Activated T-helper 1 cell treated with anti-CD3 and anti-CD28 coated beads, Interleukin-12 subunit alpha, Interleukin-12 subunit beta, Interleukin-2, Interleukin-4 antibody, amounts not matched to agents 30 ng/mL and 10 ng/mL and 1 ng/mL, durations not matched to agents 14 hours and 24 hours and 36 hours (primary cell): ENCODE measurements at regions of chr20 and their contacts with region 1.

Region 1: GRCh38 chr20:51595058-51595532 is 52.6 kb upstream of the NFATC2 start:
- DNase-seq: peak; percentile 67
- H3K4me3 Mint-ChIP-seq: peak overlapping the region; percentile 54
- H3K27ac Mint-ChIP-seq: peak overlapping the region; percentile 82
- H3K4me1 Mint-ChIP-seq: peaks cover 46% of the 10 kb centered on the region
- H3K27me3 Mint-ChIP-seq: peaks cover 3% of the 10 kb centered on the region

Region 2: DNA sequence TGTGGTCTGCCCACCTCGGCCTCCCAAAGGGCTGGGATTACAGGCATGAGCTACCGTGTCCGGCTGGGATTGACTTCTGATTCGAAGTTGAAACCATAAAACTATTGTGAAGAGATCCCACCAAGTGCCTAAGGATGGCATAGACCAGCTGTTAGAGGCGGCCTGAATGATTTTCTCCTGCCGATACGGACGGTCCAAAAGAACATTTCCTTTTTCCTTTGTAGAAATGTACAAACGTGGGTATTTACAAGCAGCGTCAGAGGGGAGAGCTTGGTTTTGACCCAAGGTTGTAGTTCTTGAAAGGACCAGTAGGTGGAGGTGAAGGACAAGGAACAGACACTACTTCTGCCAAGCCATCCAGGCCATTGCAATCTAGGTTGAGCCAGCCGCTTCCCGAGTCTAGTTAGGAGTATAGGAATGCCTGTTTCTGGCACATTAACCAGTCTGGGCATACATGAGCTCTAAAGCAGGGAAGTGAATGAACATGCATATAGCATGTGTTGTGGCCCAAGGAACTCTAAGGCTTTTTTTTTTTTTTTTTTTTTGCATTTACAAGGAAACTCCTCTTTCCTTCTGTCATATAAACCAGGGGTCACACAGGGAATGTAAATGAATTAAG is 607.4 kb before region 1 on chr20:
- intact Hi-C with region 1: loop called (anchors 10 kb)
- DNase-seq: peak; percentile 56
- H3K4me3 Mint-ChIP-seq: no peak overlapping the region
- H3K27ac Mint-ChIP-seq: no peak overlapping the region
- H3K4me1 Mint-ChIP-seq: peaks cover 5% of the 10 kb centered on the region
- H3K27me3 Mint-ChIP-seq: peaks cover 17% of the 10 kb centered on the region

Region 3: DNA sequence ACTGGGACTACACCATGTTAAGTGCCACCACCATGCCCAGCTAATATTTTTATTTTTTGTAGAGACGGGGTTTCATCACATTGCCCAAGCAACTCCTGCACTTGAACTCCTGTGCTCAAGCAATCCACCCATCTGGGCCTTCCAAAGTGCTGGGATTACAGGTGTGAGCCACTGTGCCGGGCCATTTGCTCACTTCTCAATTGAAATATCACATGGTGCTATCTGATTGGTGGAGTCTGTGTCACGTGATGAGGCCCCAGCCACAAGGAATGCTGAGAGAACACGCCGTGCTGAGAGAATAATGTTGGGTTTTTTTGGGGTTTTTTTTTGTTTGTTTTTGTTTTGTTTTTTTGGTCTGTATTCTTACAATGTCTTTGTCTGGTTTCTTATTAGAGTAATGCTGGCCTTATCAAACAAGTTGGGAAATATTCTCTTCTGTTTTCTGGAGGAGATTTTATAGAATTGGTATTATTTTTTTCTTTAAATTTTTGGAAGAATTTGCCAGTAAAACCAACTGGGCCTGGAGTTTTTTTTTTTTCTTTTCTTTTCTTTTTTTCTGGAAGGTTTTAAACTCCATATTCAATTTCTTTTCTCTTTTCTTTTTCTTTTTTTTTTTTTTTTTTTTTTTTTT is 388.9 kb before region 1 on chr20:
- intact Hi-C with region 1: no loop called
- DNase-seq: no peak
- H3K4me3 Mint-ChIP-seq: no peak overlapping the region
- H3K27ac Mint-ChIP-seq: no peak overlapping the region
- H3K4me1 Mint-ChIP-seq: no peaks in the 10 kb centered on the region
- H3K27me3 Mint-ChIP-seq: peaks cover 24% of the 10 kb centered on the region

Region 4: GRCh38 chr20:51258582-51259180 is 336.4 kb before region 1 on chr20:
- intact Hi-C with region 1: no loop called
- DNase-seq: no peak
- H3K4me3 Mint-ChIP-seq: no peak overlapping the region
- H3K27ac Mint-ChIP-seq: no peak overlapping the region
- H3K4me1 Mint-ChIP-seq: no peaks in the 10 kb centered on the region
- H3K27me3 Mint-ChIP-seq: peaks cover 10% of the 10 kb centered on the region

Region 5: GRCh38 chr20:51306503-51307358 is 288.4 kb before region 1 on chr20:
- intact Hi-C with region 1: loop called (anchors 1 kb)
- DNase-seq: peak; percentile 49
- H3K4me3 Mint-ChIP-seq: no peak overlapping the region
- H3K27ac Mint-ChIP-seq: no peak overlapping the region
- H3K4me1 Mint-ChIP-seq: peaks cover 7% of the 10 kb centered on the region
- H3K27me3 Mint-ChIP-seq: peaks cover 23% of the 10 kb centered on the region

Region 6: GRCh38 chr20:51385646-51386530 is 209.2 kb before region 1 on chr20:
- intact Hi-C with region 1: loop called (anchors 1 kb)
- DNase-seq: no peak
- H3K4me3 Mint-ChIP-seq: peak overlapping the region; percentile 50
- H3K27ac Mint-ChIP-seq: no peak overlapping the region
- H3K4me1 Mint-ChIP-seq: peaks cover 78% of the 10 kb centered on the region
- H3K27me3 Mint-ChIP-seq: no peaks in the 10 kb centered on the region

Region 7: DNA sequence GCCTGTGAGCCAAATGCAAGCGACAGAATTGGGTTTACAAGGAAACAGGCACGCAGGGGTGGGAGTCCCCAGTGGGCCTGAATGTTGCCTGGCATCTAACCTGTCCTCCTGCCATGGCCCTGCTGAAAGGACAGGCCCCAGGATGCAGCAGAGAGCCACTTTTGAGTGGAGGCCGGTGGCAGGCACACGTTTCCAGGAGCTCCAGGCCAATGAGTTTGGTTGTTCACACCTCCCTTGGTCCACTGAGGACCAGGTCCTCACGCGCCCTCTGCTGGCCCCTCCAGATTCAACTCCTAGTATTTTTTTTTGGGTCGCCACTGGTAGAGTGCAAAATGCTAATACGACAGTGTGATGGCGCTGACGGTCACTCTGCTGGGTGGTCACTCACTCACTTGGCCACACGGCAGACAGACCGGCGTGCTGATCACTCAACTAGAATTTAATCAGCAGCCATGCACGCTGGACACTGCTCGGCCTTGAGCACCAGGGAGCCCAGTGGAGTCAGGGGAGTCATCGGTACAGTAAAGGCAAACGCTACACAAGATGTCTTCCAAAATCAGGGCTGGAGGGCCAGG is 29.1 kb after region 1 on chr20:
- intact Hi-C with region 1: loop called (anchors 2 kb)
- DNase-seq: peak; percentile 31
- H3K4me3 Mint-ChIP-seq: no peak overlapping the region
- H3K27ac Mint-ChIP-seq: no peak overlapping the region
- H3K4me1 Mint-ChIP-seq: peaks cover 19% of the 10 kb centered on the region
- H3K27me3 Mint-ChIP-seq: peaks cover 2% of the 10 kb centered on the region